A549 (cell line): ENCODE measurements at regions of chr12 and their contacts with region 1.

Region 1: DNA sequence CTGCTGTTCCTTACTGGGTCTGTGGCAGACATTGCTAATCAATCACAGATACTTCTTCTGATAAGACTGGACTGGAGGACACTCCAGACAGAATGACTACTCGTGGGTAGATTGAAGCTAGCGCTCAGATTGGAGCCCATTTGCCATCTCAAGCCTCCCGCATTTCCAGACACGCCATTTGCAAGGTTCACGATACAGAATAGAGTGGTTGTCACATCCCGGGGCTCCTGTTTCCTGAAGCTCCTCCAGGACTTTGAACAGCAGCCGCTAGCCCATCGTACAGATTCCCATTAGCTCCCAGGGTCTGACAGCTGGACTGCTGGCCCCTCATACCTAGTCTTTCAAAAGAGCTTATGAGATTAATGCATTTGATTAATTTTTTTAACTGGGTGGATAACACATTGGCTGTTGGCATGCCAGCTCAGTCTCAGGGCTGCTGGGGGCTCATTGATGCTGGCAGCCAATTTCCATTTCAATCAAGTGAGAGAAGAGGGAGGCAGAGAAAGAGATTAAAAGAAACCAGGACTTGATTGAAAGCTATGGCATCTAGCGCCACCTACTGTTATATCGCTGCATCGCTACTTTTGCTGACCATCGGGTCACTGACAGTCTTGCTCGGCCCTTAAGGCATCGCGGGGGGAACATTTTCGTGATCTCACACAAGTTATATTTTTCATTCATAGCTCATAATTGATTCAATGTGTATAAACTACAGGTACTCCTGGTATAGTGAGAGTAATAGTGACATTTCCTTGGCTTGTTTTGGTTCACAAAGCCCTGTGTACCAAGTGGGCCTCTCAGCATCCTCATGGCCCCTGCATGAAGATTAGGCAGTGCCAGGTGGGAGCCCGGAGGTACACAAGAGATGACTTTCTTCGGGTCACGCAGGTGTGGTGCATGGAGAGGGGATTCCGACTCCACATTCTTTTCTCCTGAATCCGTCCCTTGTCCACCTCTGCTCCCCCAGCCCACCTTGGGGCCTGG is 78.6 kb downstream of the CCDC60 start:
- DNase-seq: peak; percentile 54 to 77
- ATAC-seq: peak; percentile 65 to 85; a peak in 3 of 6 replicates
- H3K4me3 ChIP-seq: no peak overlapping the region
- H3K27ac ChIP-seq: no peak overlapping the region
- H3K4me1 ChIP-seq: no peaks in the 10 kb centered on the region
- CTCF ChIP-seq: peak; percentile 84
- EP300 ChIP-seq: no peak
- POLR2A ChIP-seq: no peak
- RAD21 ChIP-seq: peak; percentile 81 to 85

Region 2: GRCh38 chr12:118979763-118980406 is 433.2 kb before region 1 on chr12:
- CTCF ChIA-PET with region 1: interaction called, 11 read pairs
- POLR2A ChIA-PET with region 1: no interaction called
- DNase-seq: peak; percentile 75 to 80
- ATAC-seq: peak; percentile 43 to 91; a peak in 4 of 6 replicates
- H3K4me3 ChIP-seq: no peak overlapping the region
- H3K27ac ChIP-seq: no peak overlapping the region
- H3K4me1 ChIP-seq: no peaks in the 10 kb centered on the region
- CTCF ChIP-seq: peak; percentile 61
- EP300 ChIP-seq: no peak
- POLR2A ChIP-seq: no peak
- RAD21 ChIP-seq: peak; percentile 55 to 64; a peak in 4 of 5 replicates

Region 3: DNA sequence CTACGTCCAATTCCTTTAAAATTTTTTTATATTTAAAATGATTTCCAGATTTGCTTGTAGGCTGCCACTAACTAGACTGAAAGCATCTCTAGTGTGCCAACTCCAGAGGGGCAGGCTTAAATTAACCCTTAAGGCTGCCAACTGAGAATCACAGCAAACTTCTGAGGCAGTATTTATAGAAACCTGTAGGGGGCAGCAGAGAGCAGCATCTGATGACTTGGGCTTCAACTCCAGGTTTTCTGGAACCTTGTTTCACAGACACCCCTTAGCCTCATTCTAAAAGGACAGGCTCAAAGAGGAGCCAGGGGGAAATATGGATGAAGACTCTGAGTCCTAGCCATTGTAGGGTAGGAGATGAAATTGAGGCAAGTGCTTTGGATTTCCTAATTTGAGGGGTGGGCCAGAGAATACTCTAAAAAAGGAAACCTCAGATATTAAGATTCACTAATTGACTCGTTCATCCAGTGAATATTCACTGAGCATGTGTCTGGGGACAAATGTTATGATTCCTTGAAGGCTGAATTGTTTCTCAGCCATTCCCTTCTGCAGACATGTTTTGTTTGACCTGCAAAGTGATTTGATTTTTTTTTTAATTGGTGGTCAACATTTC is 297.7 kb before region 1 on chr12:
- CTCF ChIA-PET with region 1: interaction called, 25 read pairs
- POLR2A ChIA-PET with region 1: no interaction called
- DNase-seq: peak; percentile 41 to 50
- ATAC-seq: peak; percentile 57 to 80; a peak in 3 of 6 replicates
- H3K4me3 ChIP-seq: no peak overlapping the region
- H3K27ac ChIP-seq: no peak overlapping the region
- H3K4me1 ChIP-seq: no peaks in the 10 kb centered on the region
- CTCF ChIP-seq: peak; percentile 85
- EP300 ChIP-seq: no peak
- POLR2A ChIP-seq: no peak
- RAD21 ChIP-seq: peak; percentile 76 to 81

Region 4: GRCh38 chr12:119399301-119399700 is 13.8 kb before region 1 on chr12:
- CTCF ChIA-PET with region 1: interaction called, 20 read pairs
- POLR2A ChIA-PET with region 1: no interaction called
- DNase-seq: no peak
- ATAC-seq: no peak
- H3K4me3 ChIP-seq: no peak overlapping the region
- H3K27ac ChIP-seq: no peak overlapping the region
- H3K4me1 ChIP-seq: no peaks in the 10 kb centered on the region
- CTCF ChIP-seq: no peak
- EP300 ChIP-seq: no peak
- POLR2A ChIP-seq: no peak
- RAD21 ChIP-seq: no peak

Region 5: DNA sequence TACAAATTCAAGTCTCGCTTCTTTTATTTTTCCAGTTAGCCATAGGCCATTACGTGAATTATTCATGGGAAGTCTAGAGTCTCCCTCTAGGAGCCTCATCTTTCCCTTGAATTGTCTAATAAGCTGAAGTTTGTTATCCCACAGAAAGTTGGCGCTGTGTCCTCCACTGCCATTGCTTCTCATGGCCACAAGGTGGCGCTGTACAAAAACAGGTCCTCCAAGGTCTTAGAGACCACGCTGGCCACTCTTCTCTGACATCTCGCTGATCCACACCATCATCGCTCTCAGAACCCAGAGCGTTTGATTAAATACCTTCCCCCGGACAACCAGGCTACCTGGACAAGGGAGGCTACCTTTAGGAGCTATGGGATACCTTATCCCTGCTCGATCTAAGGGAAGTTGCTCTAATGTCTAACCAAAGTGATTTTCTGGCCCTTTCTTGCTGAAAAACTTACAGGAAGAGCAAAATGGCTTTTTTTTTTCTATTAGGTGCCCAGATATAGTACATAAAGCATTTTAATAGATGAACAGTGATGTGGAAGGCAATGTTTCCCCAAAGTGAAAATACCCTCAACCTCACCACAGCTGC is 31.4 kb after region 1 on chr12:
- CTCF ChIA-PET with region 1: interaction called, 14 read pairs
- POLR2A ChIA-PET with region 1: interaction called, 3 read pairs
- DNase-seq: peak; percentile 46 to 85
- ATAC-seq: peak; percentile 21 to 87; a peak in 4 of 6 replicates
- H3K4me3 ChIP-seq: no peak overlapping the region; the same call in 2 of the 3 replicates
- H3K27ac ChIP-seq: no peak overlapping the region
- H3K4me1 ChIP-seq: peaks cover 33% of the 10 kb centered on the region
- CTCF ChIP-seq: peak; percentile 73
- EP300 ChIP-seq: no peak
- POLR2A ChIP-seq: no peak
- RAD21 ChIP-seq: peak; percentile 45 to 64; a peak in 4 of 5 replicates